ENCODE measurements at regions of chrX and their contacts with region 1.

Region 1: DNA sequence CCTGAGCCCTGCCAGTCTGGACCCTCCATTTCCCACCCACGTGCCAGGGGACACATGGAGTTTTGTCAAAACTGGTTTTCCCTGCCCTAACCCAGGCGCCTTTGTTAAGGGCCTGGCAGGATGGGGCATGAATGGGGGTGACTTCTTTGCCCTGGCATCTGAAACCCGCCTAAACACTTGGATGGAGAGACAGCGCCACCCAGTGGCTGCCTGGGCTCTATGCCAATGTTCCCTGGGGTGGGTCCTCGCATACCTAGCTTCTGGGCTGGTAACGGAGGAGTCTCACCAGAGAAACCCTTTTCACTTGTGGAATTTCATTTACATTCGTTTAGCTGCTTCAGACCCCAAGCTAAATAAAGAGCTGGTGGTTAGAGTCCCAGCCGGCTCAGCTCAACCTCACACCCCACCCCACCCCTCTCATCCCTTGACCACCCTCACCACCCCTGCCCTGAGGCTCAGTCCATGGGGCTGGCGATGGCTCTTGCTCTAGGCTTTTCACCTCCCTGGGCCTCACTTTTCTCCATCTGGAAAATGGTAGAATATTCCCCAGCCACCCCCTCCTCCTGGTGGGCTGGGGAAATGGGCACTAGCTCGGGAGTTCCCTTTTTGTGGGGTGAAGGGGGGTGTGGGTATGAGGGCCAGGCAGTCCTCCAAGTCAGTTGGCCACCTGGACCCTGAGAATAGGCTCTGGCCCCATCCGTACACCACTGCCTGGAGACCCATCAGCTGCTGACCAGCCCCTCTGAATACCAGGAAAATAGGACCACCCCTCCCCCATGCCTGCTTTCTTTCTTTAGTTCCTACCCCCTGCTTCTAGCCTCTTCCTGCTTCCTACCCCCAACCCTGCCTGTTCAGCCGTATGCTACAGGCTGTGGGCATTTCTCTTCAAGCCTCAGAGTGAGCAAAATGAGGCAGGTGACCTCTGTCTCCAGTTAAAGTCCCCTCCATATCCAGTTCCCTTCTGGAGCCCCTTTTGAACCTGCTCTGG is 57.1 kb upstream of the PJA1 start:
- DNase-seq: peak; percentile 54
- H3K4me3 ChIP-seq: no peak overlapping the region
- H3K27ac ChIP-seq: no peak overlapping the region
- H3K4me1 ChIP-seq: no peaks in the 10 kb centered on the region
- H3K27me3 ChIP-seq: no peaks in the 10 kb centered on the region
- CTCF ChIP-seq: peak; percentile 49 to 76 (median 70)
- POLR2A ChIP-seq: no peak

Region 2: DNA sequence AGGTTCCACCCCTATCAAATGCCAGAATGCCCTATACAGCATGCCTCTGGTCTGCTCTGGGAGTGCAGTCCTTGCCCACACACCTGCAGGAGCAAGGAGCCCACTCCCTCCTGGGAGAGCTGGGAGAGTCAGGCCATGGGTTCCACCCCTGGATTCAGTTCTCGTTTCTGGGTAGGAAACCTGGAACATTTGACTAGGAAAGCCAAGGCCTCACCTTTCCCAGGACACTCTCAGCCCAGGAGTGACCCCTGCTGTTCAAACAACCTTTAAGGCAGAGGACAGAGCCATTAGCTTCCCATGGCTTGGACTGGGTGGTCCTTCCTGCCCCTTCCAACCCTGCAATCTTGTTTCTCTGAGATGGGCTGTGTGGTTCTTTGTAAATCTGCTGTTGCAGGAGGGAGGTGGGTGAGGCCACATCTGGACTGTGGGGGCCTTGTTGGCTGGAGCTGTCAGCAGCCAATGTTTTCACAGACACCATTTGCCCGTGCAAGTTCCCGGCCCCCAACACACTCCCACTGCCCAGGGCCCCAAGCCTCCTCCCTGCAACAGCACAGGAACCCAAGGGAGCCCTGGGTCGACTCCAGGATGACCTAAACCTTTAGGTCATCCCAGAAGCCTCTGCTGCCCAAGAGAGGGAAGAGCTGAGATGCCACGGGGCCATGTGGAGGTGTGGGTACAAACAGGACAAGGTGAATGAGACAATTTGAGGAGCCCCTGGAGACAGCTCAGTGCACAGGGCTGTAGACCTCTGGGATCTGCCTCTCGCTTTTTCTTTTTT is 161.6 kb before region 1 on chrX:
- intact Hi-C with region 1: loop called (anchors 10 kb)
- DNase-seq: peak; percentile 18
- H3K4me3 ChIP-seq: no peak overlapping the region
- H3K27ac ChIP-seq: no peak overlapping the region
- H3K4me1 ChIP-seq: no peaks in the 10 kb centered on the region
- H3K27me3 ChIP-seq: no peaks in the 10 kb centered on the region
- CTCF ChIP-seq: peak in 3 of 4 experiments; percentile 30 to 46 (median 41)
- POLR2A ChIP-seq: no peak